GM12878 (cell line): ENCODE measurements at regions of chr1 and their contacts with region 1.

Region 1: DNA sequence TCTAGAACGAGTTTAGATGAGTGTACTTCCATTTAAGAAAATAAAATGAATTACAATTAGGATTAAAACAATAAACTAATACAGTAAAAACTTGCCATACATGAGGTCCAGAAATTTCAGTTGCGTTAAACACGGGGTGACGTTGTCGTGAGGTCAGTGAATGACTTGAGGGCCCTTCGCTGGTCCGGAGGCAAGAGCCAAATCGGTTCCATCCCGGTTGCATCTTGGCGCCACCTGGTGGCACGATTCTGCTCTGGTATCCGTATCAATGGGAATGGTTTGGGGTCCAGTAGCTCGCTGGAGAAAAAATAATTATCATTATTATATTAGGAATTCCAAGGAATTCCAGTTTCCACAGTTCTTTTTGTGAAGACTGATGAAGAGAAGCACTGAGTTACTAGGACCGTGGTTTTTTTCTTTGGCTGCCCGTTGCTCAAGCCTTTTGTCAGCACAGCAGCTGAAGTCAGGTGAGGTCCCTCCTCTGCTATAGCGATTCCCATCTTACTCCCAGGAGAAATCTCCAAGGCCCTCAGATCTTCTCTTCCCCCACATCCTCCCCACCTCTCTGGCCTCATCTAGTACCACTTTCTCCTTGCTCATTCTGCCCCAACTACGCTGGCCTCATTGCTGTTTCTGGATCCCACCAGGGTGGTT is 161.4 kb downstream of the SLC35F3 start:
- DNase-seq: peak; percentile 7
- ATAC-seq: peak; percentile 94
- H3K4me3 ChIP-seq: no peak overlapping the region
- H3K27ac ChIP-seq: no peak overlapping the region
- H3K4me1 ChIP-seq: no peaks in the 10 kb centered on the region
- H3K27me3 ChIP-seq: no peaks in the 10 kb centered on the region
- CTCF ChIP-seq: peak; percentile 71 to 78 (median 76)
- EP300 ChIP-seq: no peak
- POLR2A ChIP-seq: no peak
- RAD21 ChIP-seq: peak; percentile 82

Region 2: GRCh38 chr1:233304489-233305102 is 761.3 kb before region 1 on chr1:
- CTCF ChIA-PET with region 1: interaction called, 6 read pairs
- POLR2A ChIA-PET with region 1: no interaction called
- RAD21 ChIA-PET with region 1: no interaction called
- SMC1A ChIA-PET with region 1: no interaction called
- in situ Hi-C with region 1: no loop called
- intact Hi-C with region 1: loop called (anchors 5 kb)
- DNase-seq: no peak
- ATAC-seq: peak; percentile 49; the same call in 2 of the 3 replicates
- H3K4me3 ChIP-seq: no peak overlapping the region
- H3K27ac ChIP-seq: no peak overlapping the region
- H3K4me1 ChIP-seq: no peaks in the 10 kb centered on the region
- H3K27me3 ChIP-seq: no peaks in the 10 kb centered on the region; a peak in 1 of 4 replicates
- CTCF ChIP-seq: peak; percentile 58 to 69 (median 69)
- EP300 ChIP-seq: no peak
- POLR2A ChIP-seq: no peak
- RAD21 ChIP-seq: peak; percentile 73

Region 3: GRCh38 chr1:233364695-233365539 is 701.0 kb before region 1 on chr1:
- CTCF ChIA-PET with region 1: interaction called, 15 read pairs
- POLR2A ChIA-PET with region 1: no interaction called
- RAD21 ChIA-PET with region 1: interaction called, 4 read pairs
- SMC1A ChIA-PET with region 1: interaction called, 4 read pairs
- in situ Hi-C with region 1: no loop called
- intact Hi-C with region 1: loop called (anchors 1 kb)
- DNase-seq: no peak
- ATAC-seq: 0 out of 3 replicates have a peak, but pooled peaks have one; percentile 19
- H3K4me3 ChIP-seq: no peak overlapping the region
- H3K27ac ChIP-seq: no peak overlapping the region
- H3K4me1 ChIP-seq: no peaks in the 10 kb centered on the region
- H3K27me3 ChIP-seq: no peaks in the 10 kb centered on the region
- CTCF ChIP-seq: peak; percentile 45 to 53 (median 52); a peak in 4 of 6 replicates
- EP300 ChIP-seq: no peak
- POLR2A ChIP-seq: no peak
- RAD21 ChIP-seq: peak; percentile 49; the same call in 1 of the 2 replicates

Region 4: DNA sequence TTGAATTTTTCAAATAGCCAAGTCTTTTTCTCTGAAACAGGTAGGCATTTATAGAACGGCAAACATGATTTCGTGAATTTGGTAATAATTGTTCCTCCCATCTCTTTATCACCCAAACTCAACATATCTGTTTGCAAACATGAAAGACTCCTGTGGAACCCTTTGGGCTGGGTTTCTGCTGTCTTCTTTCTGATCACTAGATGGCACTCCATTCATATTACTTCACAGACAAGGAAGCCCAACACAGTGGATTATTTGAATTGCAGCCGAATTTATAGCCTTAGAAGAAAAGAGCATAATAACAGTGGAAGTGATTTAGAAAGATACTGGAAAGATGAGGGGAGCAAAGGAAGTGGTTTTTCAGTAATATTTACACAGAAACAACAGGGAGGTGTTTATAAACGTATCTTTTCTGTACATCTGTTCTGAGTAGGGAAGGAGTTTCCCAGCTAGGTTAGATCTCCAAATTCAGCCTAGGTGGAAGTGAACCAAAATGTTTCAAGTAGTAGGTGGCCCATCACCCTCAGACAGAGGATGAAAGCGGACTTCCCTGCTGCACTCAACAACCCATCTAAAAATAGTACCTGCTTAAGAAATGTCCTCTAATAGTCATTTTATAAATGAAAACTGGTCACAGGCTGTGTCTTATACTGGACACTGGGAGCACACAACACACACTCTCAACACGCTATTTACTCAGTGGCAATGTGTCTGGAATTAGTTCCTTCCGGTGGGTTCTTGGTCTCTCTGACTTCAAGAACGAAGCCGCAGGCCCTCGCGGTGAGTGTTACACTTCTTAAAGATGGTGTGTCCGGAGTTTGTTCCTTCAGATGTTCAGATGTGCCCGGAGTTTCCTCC is 670.8 kb before region 1 on chr1:
- CTCF ChIA-PET with region 1: interaction called, 19 read pairs
- POLR2A ChIA-PET with region 1: no interaction called
- RAD21 ChIA-PET with region 1: interaction called, 10 read pairs
- SMC1A ChIA-PET with region 1: interaction called, 19 read pairs
- in situ Hi-C with region 1: loop called (anchors 5 kb)
- intact Hi-C with region 1: loop called (anchors 1 kb)
- DNase-seq: no peak
- ATAC-seq: peak; percentile 96
- H3K4me3 ChIP-seq: no peak overlapping the region
- H3K27ac ChIP-seq: no peak overlapping the region
- H3K4me1 ChIP-seq: no peaks in the 10 kb centered on the region
- H3K27me3 ChIP-seq: no peaks in the 10 kb centered on the region; a peak in 1 of 4 replicates
- CTCF ChIP-seq: peak; percentile 76 to 89 (median 77)
- EP300 ChIP-seq: no peak
- POLR2A ChIP-seq: no peak
- RAD21 ChIP-seq: peak; percentile 98

Region 5: DNA sequence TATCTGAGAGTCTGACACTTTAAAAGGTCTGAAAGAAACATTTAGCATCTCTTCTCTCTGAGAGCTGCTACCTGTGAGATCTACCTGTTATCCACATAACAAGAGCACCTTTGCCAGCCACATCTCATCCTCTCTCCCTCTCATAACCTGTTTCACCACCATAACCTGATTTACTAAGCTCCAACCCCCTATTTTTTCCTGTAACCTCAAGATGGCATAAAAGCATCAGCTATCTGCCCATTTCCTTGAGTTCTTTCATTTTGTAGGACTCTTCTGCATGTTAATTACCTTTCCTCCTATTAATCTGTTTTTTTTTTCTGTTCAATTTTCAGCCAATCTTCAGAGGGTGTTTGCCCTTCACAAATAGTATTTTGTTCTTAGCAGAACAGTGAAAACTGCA is 588.6 kb before region 1 on chr1:
- CTCF ChIA-PET with region 1: interaction called, 19 read pairs
- POLR2A ChIA-PET with region 1: no interaction called
- RAD21 ChIA-PET with region 1: interaction called, 4 read pairs
- SMC1A ChIA-PET with region 1: interaction called, 9 read pairs
- in situ Hi-C with region 1: no loop called
- intact Hi-C with region 1: no loop called
- DNase-seq: no peak
- ATAC-seq: no peak
- H3K4me3 ChIP-seq: no peak overlapping the region
- H3K27ac ChIP-seq: no peak overlapping the region
- H3K4me1 ChIP-seq: peaks cover 3% of the 10 kb centered on the region; the same call in 1 of the 2 replicates
- H3K27me3 ChIP-seq: no peaks in the 10 kb centered on the region
- CTCF ChIP-seq: peak in 1 of 3 experiments; percentile 31; a peak in 2 of 6 replicates
- EP300 ChIP-seq: no peak
- POLR2A ChIP-seq: no peak
- RAD21 ChIP-seq: peak; percentile 52